ENCODE measurements at regions of chr5 and their contacts with region 1.

Region 1: DNA sequence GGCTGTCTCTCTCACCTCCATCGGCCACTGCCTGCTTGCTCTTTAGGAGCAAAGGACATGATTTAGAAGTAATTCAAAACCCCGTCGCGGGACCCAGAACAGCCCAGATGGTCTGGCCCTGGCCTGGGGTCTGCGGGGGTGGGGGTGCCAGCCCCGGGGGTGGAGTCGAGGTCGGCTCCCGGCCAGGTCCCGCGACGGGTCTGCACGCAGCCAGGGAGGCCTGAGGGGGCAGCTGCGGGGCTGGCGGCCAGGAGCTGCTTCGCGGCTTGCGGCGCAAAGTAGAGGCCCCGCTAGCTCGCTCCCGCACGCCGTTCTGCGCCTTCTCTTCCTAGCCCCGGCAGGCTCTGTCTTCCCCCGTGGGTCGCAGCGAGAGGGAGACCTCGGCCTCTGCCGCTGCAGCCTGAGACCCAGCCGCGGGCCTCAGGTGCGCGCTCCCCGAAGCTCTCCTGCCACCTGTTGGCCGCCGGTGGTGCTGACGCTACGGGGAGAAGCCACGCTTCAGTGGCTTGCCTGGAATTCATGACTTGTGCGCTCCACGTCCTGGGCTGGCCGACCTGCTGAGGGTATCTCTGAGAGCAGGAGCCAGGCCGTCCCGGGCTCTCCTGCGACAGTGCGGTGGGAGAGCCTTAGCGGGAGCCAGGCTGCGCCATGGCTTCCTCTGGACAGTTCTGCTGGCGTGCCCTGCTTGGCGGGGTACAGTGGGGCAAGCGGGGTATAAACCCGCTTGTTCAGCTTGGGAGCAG is 157.2 kb upstream of the PITX1 start:
- H3K4me3 Mint-ChIP-seq: peak overlapping the region; percentile 88
- H3K27ac Mint-ChIP-seq: peak overlapping the region; percentile 73
- H3K4me1 Mint-ChIP-seq: peaks cover 13% of the 10 kb centered on the region
- H3K27me3 Mint-ChIP-seq: peaks cover 74% of the 10 kb centered on the region

Region 2: GRCh38 chr5:135013947-135014570 is 177.2 kb before region 1 on chr5:
- intact Hi-C with region 1: loop called (anchors 5 kb)
- H3K4me3 Mint-ChIP-seq: no peak overlapping the region
- H3K27ac Mint-ChIP-seq: no peak overlapping the region
- H3K4me1 Mint-ChIP-seq: no peaks in the 10 kb centered on the region
- H3K27me3 Mint-ChIP-seq: peaks cover 20% of the 10 kb centered on the region

Measured in dendritic cell treated with granulocyte-macrophage colony-stimulating factor and Interleukin-4, amounts not matched to agents 40 ng/mL and 50 ng/mL, for 4 days (primary cell).